ENCODE measurements at regions of chr5 and their contacts with region 1.

Region 1: GRCh38 chr5:113606298-113607134 is 93.0 kb downstream of the YTHDC2 start:
- DNase-seq: peak; percentile 51
- ATAC-seq: peak; percentile 77
- H3K4me3 Mint-ChIP-seq: no peak overlapping the region
- H3K27ac Mint-ChIP-seq: no peak overlapping the region
- H3K4me1 Mint-ChIP-seq: peaks cover 5% of the 10 kb centered on the region
- H3K27me3 Mint-ChIP-seq: peaks cover 6% of the 10 kb centered on the region
- CTCF ChIP-seq: peak; percentile 87

Region 2: DNA sequence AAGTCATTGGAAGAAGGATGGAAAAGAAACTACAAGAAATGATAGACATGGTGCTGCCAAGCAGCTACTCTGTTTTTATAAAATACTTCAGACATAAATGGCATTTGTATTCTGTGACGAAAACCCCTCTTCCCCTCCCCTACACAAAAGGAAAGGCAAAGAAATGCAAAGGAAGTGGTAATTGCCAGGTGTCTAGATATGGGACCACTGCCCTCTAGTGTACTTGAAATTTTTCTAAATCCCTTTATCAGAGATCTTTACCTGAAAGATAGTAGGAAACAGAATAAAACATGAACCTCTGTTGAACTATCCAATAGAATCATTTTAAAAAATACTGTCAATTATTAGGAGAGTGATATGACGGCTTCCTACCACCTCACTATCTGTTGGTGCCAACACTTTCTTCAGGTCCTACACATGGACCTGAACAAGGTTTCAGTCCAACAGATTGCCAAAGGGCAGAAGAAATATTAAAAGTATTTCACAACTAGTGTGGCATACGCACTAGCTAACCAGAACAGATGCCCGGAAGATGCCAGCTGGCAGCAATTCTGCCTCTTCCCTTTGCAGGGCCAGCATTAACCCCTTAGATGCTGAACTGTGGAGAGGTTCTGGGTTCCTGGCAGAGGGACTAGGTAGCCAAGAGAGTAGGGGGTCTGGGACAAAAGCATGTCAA is 275.8 kb before region 1 on chr5:
- CTCF ChIA-PET with region 1: interaction called, 41 read pairs
- POLR2A ChIA-PET with region 1: no interaction called
- intact Hi-C with region 1: loop called (anchors 2 kb)
- DNase-seq: no peak
- ATAC-seq: peak; percentile 89
- H3K4me3 Mint-ChIP-seq: no peak overlapping the region
- H3K27ac Mint-ChIP-seq: no peak overlapping the region
- H3K4me1 Mint-ChIP-seq: peaks cover 11% of the 10 kb centered on the region
- H3K27me3 Mint-ChIP-seq: no peaks in the 10 kb centered on the region
- CTCF ChIP-seq: peak; percentile 61

Region 3: DNA sequence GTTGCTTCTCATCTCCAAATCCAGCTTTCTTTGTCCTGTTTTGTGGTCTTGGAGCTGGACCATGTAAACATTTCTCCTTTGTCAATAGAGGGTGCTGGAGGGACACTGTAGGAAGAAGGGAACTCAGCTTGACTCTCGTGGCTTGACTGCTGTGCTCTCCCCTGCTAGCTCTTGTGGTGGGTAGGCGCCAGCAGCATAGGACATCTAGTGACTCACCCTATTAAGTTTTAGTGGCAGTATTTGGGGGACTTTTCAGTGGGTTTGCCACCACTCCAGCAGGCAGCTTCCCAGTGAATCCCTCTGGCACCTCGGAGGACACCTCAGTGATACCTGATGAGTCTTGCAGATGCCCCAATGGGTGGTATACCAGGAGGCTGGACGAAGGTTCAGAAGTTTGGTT is 269.5 kb before region 1 on chr5:
- CTCF ChIA-PET with region 1: interaction called, 41 read pairs
- POLR2A ChIA-PET with region 1: no interaction called
- intact Hi-C with region 1: loop called (anchors 2 kb)
- DNase-seq: peak; percentile 11
- ATAC-seq: peak; percentile 71
- H3K4me3 Mint-ChIP-seq: no peak overlapping the region
- H3K27ac Mint-ChIP-seq: no peak overlapping the region
- H3K4me1 Mint-ChIP-seq: peaks cover 4% of the 10 kb centered on the region
- H3K27me3 Mint-ChIP-seq: peaks cover 10% of the 10 kb centered on the region
- CTCF ChIP-seq: no peak

Region 4: DNA sequence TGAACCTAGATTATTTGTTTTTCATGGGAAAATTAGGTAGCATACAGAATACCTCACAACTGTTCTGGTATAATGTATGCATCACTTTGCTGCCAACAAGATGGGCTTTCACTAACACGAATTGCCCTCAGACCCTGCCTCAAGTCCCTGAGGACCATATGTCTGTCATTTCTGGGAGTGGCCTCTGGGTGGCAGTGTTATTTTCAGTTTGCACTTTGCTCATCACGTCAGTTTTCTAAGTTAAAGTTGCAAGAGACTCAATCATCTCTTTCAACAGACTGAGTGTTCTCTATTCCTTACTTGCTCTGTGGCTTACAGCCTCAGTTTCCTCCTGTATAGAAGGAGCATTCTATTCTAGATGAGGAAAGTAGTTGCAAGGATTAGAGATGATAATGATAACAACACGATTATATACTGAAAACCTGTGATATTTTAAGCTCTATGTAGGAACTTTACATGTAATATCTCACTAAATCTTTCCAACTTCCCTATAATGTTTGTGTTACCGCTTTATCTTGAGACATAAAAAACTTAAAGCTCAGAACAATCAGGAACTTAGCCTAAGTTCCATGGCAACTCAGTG is 227.5 kb before region 1 on chr5:
- CTCF ChIA-PET with region 1: interaction called, 26 read pairs
- POLR2A ChIA-PET with region 1: no interaction called
- intact Hi-C with region 1: loop called (anchors 5 kb)
- DNase-seq: peak; percentile 76
- ATAC-seq: peak; percentile 76
- H3K4me3 Mint-ChIP-seq: no peak overlapping the region
- H3K27ac Mint-ChIP-seq: no peak overlapping the region
- H3K4me1 Mint-ChIP-seq: peaks cover 26% of the 10 kb centered on the region
- H3K27me3 Mint-ChIP-seq: peaks cover 22% of the 10 kb centered on the region
- CTCF ChIP-seq: peak; percentile 84

Measured in activated CD8-positive, alpha-beta T cell treated with anti-CD3 and anti-CD28 coated beads for 36 hours (primary cell).